Gastrocnemius medialis (tissue), 4 donors: ENCODE measurements at regions of chr4 and their contacts with region 1.

Region 1: DNA sequence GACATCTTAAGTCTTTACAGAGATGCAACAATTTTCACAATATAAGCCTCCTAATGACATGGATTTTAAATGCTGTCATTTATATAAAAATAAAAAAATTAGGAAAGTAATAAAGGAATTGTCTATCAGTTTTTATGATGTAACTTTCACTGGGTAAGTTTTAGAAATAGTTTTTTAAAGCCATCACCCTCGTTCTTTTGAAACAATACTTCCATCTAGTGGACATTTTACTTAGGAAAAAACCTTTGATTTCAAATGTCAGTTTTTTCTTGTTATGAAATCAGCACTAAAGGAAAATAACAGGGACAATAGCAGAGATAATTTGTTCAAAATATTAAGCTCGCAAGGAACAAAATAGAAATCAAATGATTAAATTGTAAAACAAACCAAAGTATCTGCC is 24.3 kb upstream of the NDNF start:
- DNase-seq: no peak
- ATAC-seq: no peak
- H3K4me3 ChIP-seq: no peak overlapping the region
- H3K27ac ChIP-seq: no peak overlapping the region
- H3K4me1 ChIP-seq: no peaks in the 10 kb centered on the region
- H3K27me3 ChIP-seq: no peaks in the 10 kb centered on the region
- CTCF ChIP-seq: peak in 4 of 5 experiments; percentile 11 to 62 (median 50)
- POLR2A ChIP-seq: no peak

Region 2: GRCh38 chr4:120156120-120156718 is 940.4 kb before region 1 on chr4:
- in situ Hi-C with region 1: loop called (anchors 5 to 25 kb)
- intact Hi-C with region 1: loop called (anchors 2 kb)
- DNase-seq: no peak
- ATAC-seq: peak in 1 of 2 donors; percentile 60
- H3K4me3 ChIP-seq: no peak overlapping the region
- H3K27ac ChIP-seq: no peak overlapping the region
- H3K4me1 ChIP-seq: no peaks in the 10 kb centered on the region
- H3K27me3 ChIP-seq: no peaks in the 10 kb centered on the region
- CTCF ChIP-seq: peak; percentile 30 to 73 (median 61)
- POLR2A ChIP-seq: no peak

Region 3: DNA sequence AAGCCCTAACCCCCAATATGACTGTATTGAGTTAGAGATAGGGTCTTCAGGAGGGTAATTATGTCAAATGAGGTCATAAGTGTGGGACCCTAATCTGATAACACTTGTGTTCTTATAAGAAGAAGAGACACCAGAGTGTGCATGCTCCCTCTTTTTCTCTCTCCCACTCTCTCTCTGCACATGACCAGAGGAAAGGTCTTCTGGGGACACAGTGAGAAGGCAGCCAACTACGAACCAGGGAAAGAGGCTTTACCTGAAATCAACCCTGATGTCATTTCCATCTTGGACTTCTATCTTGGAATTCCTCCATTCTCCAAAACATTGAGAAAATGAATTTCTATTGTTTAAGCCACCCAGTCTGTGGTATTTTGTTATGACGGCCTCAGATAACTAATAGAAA is 932.7 kb before region 1 on chr4:
- in situ Hi-C with region 1: loop called (anchors 5 to 25 kb)
- intact Hi-C with region 1: no loop called
- DNase-seq: no peak
- ATAC-seq: no peak
- H3K4me3 ChIP-seq: no peak overlapping the region
- H3K27ac ChIP-seq: no peak overlapping the region
- H3K4me1 ChIP-seq: peaks cover 0 to 23% of the 10 kb centered on the region in 2 donors
- H3K27me3 ChIP-seq: no peaks in the 10 kb centered on the region
- CTCF ChIP-seq: no peak
- POLR2A ChIP-seq: no peak

Region 4: DNA sequence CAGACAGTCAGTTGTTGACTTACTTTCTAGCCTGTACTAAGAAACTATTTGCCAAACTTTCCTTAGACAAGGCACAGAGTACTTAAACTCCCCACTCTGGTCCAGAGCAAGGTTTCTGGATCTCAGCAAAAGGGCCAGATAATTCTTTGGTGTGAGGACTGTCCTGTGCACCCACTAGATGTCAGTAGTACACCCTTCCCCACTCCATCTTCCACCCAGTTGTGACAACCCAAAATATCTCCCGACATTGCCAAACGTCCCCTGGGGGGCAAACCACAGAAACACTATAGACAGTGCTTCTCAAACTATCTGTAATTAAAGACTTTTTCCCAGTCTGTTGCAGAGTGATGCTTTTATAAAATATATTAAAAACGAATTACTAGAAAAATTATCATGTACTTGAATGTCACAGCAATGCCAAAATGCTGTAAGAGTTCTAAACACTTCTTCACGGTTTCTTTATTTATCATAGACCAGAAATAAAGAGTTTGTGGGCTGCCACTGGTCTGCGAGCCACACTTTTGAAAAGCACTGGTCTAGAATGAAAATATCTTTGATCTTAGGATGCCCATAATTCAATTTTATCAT is 377.6 kb before region 1 on chr4:
- in situ Hi-C with region 1: no loop called
- intact Hi-C with region 1: loop called (anchors 5 kb)
- DNase-seq: no peak
- ATAC-seq: peak in 1 of 2 donors; percentile 30
- H3K4me3 ChIP-seq: no peak overlapping the region
- H3K27ac ChIP-seq: no peak overlapping the region
- H3K4me1 ChIP-seq: no peaks in the 10 kb centered on the region
- H3K27me3 ChIP-seq: no peaks in the 10 kb centered on the region
- CTCF ChIP-seq: peak in 3 of 5 experiments; percentile 15 to 43 (median 39)
- POLR2A ChIP-seq: no peak

Region 5: GRCh38 chr4:121025540-121025939 is 71.1 kb before region 1 on chr4:
- in situ Hi-C with region 1: no loop called
- intact Hi-C with region 1: loop called (anchors 10 kb)
- DNase-seq: no peak
- ATAC-seq: no peak
- H3K4me3 ChIP-seq: no peak overlapping the region
- H3K27ac ChIP-seq: no peak overlapping the region
- H3K4me1 ChIP-seq: no peaks in the 10 kb centered on the region
- H3K27me3 ChIP-seq: no peaks in the 10 kb centered on the region
- CTCF ChIP-seq: no peak
- POLR2A ChIP-seq: no peak

Region 6: DNA sequence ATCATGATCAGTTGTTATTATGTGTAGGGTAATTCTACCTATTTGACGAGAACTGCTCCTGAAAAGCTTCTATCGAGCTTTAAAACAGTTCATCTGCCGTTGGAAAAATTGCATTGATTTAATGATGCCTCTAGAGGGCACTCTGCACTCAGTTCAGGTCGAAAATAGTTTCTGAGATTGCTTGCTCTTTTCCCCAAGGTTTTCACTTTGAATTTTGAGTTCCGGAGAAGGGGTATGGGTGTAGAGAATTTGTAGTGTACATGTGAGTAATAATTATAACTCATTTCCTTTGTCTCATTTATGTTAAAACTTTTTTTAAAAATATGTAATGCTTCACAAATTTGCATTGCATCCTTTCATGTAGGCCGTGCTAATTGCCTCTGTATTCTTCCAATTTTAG is 95.9 kb after region 1 on chr4:
- in situ Hi-C with region 1: no loop called
- intact Hi-C with region 1: no loop called
- DNase-seq: no peak
- ATAC-seq: no peak
- H3K4me3 ChIP-seq: peak overlapping the region in 1 of 4 donors; percentile 28
- H3K27ac ChIP-seq: no peak overlapping the region
- H3K4me1 ChIP-seq: no peaks in the 10 kb centered on the region
- H3K27me3 ChIP-seq: no peaks in the 10 kb centered on the region
- CTCF ChIP-seq: peak in 4 of 5 experiments; percentile 30 to 61 (median 44)
- POLR2A ChIP-seq: no peak